ENCODE measurements at regions of chr18 and their contacts with region 1.

Region 1: GRCh38 chr18:36015629-36016028 is 43.1 kb downstream of the RMP24 start:
- DNase-seq: no peak
- H3K4me3 ChIP-seq: no peak overlapping the region
- H3K27ac ChIP-seq: no peak overlapping the region
- H3K4me1 ChIP-seq: no peaks in the 10 kb centered on the region
- H3K27me3 ChIP-seq: no peaks in the 10 kb centered on the region
- CTCF ChIP-seq: no peak

Region 2: DNA sequence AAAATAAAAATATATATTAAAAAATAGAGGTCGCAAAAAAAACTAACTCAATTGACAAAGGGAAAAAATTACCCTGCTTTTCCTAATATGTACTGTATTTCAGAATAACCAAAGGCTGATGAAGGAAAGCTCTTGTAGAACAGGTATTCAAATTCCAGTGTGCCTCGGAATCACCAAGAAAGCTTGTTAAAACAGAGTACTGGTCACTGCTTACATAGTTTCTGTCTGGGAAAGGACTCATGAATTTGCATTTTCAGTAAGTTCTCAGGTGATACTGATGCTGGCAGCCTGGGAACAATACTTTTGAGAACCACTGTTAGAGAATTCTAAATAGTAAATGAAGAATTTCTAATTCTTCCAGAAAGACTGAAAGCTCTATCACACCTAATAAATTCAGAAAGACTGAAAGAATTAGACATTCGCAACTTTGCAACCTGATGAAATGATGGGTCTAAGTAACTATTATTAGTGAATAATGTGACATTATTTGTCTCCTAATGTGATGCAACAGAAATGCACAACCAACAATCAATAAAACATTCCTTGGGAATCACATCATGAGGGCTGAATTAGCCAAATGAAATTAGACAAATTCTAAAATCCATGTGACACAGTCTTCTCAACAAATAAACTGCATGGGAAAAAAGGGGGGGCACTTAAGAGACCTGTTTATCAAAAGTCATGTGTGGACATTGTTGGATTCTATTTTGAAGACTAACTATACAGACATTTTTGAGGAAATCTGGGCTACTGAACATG is 29.8 kb after region 1 on chr18:
- CTCF ChIA-PET with region 1: no interaction called
- dilution Hi-C with region 1: no loop called
- in situ Hi-C with region 1: no loop called
- intact Hi-C with region 1: no loop called
- DNase-seq: peak; percentile 69
- H3K4me3 ChIP-seq: no peak overlapping the region
- H3K27ac ChIP-seq: peak overlapping the region; percentile 31
- H3K4me1 ChIP-seq: peaks cover 5% of the 10 kb centered on the region
- H3K27me3 ChIP-seq: no peaks in the 10 kb centered on the region
- CTCF ChIP-seq: no peak

Region 3: GRCh38 chr18:36086186-36086585 is 70.6 kb after region 1 on chr18:
- CTCF ChIA-PET with region 1: interaction called, 3 read pairs
- dilution Hi-C with region 1: no loop called
- in situ Hi-C with region 1: no loop called
- intact Hi-C with region 1: loop called (anchors 2 kb)
- DNase-seq: no peak
- H3K4me3 ChIP-seq: no peak overlapping the region
- H3K27ac ChIP-seq: no peak overlapping the region
- H3K4me1 ChIP-seq: peaks cover 17% of the 10 kb centered on the region
- H3K27me3 ChIP-seq: no peaks in the 10 kb centered on the region
- CTCF ChIP-seq: no peak

Region 4: GRCh38 chr18:36129300-36130038 is 113.8 kb after region 1 on chr18 and contains the starts of genes ELP2 and SLC39A6:
- CTCF ChIA-PET with region 1: interaction called, 4 read pairs
- dilution Hi-C with region 1: no loop called
- in situ Hi-C with region 1: no loop called
- intact Hi-C with region 1: loop called (anchors 1 kb)
- DNase-seq: peak; percentile 92
- H3K4me3 ChIP-seq: peak within 1 kb of the TSS; percentile 66 to 96 (median 85)
- H3K27ac ChIP-seq: peak within 1 kb of the TSS; percentile 86
- H3K4me1 ChIP-seq: peaks cover 23% of the 10 kb centered on the region
- H3K27me3 ChIP-seq: no peaks in the 10 kb centered on the region
- CTCF ChIP-seq: peak in 1 of 2 donors; percentile 1
- total RNA-seq, gene ELP2: 88.6 to 91.4 TPM
- total RNA-seq, gene SLC39A6: 123 to 255 TPM